ENCODE measurements at regions of chr19 and their contacts with region 1.

Region 1: GRCh38 chr19:778910-779653 is 18.2 kb upstream of the PTBP1 start:
- DNase-seq: no peak
- ATAC-seq: peak; percentile 30 to 40
- H3K4me3 ChIP-seq: no peak overlapping the region
- H3K27ac ChIP-seq: peak overlapping the region; percentile 62
- H3K4me1 ChIP-seq: peaks cover 32% of the 10 kb centered on the region
- H3K27me3 ChIP-seq: no peaks in the 10 kb centered on the region
- CTCF ChIP-seq: no peak

Region 2: GRCh38 chr19:821825-822503 is 42.9 kb after region 1 on chr19 and contains the start of gene PLPPR3:
- intact Hi-C with region 1: no loop called
- DNase-seq: no peak
- ATAC-seq: no peak
- H3K4me3 ChIP-seq: peak within 1 kb of the TSS; percentile 39
- H3K27ac ChIP-seq: no peak within 1 kb of the TSS
- H3K4me1 ChIP-seq: peaks cover 15% of the 10 kb centered on the region
- H3K27me3 ChIP-seq: peaks cover 32% of the 10 kb centered on the region
- CTCF ChIP-seq: no peak
- total RNA-seq, gene PLPPR3: 2.1 TPM

Region 3: DNA sequence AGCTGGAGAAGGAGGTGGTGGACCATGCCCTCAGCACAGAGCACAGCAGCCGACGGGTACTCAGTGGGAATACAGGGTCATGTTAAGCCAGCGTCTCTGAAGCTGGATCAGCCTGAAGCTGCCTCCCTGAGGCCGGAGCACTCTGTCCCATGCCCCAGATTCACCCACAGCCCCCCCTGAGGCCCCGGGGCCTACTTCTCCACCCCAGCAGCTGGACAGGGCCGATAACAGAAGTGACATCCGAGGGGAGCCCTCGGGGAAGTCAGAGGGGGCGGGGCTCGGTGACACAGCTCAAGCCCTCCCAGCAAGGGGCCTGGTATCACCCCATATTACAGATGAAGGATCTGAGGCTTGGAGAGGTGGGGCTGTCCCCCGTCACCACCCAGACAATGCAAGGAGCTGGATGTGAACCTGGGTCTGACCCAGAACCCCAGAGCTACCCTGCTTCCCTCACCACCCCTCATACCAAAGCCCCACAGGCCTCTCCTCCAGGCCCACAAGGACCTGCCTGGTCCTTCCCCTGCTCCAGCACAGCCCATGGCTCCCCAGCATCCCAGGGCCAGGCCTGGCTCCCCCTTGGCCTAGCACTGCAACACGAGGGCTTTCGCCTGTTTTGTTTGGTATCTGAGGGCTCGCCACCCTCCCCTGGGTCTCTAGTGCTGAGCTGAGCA is 128.2 kb after region 1 on chr19:
- intact Hi-C with region 1: loop called (anchors 5 kb)
- DNase-seq: peak; percentile 72
- ATAC-seq: peak in 1 of 2 donors; percentile 3
- H3K4me3 ChIP-seq: no peak overlapping the region
- H3K27ac ChIP-seq: peak overlapping the region; percentile 79
- H3K4me1 ChIP-seq: peaks cover 30% of the 10 kb centered on the region
- H3K27me3 ChIP-seq: no peaks in the 10 kb centered on the region
- CTCF ChIP-seq: no peak

Measured in lower lobe of right lung (tissue), 2 donors.